GM12878 (cell line): ENCODE measurements at regions of chr3 and their contacts with region 1.

Region 1: GRCh38 chr3:23761440-23761896 is 44.3 kb upstream of the UBE2E1 start:
- DNase-seq: peak; percentile 56
- ATAC-seq: peak; percentile 68
- H3K4me3 ChIP-seq: peak overlapping the region; percentile 50; the same call in 1 of the 2 replicates
- H3K27ac ChIP-seq: peak overlapping the region; percentile 39
- H3K4me1 ChIP-seq: peaks cover 37% of the 10 kb centered on the region
- H3K27me3 ChIP-seq: no peaks in the 10 kb centered on the region
- CTCF ChIP-seq: peak; percentile 49 to 59 (median 54)
- EP300 ChIP-seq: no peak; a peak in 1 of 4 replicates
- POLR2A ChIP-seq: no peak
- RAD21 ChIP-seq: peak; percentile 72

Region 2: GRCh38 chr3:23161896-23162570 is 599.4 kb before region 1 on chr3:
- CTCF ChIA-PET with region 1: interaction called, 5 read pairs
- POLR2A ChIA-PET with region 1: no interaction called
- RAD21 ChIA-PET with region 1: no interaction called
- SMC1A ChIA-PET with region 1: no interaction called
- in situ Hi-C with region 1: no loop called
- intact Hi-C with region 1: loop called (anchors 2 kb)
- DNase-seq: peak; percentile 69
- ATAC-seq: peak; percentile 74
- H3K4me3 ChIP-seq: peak overlapping the region; percentile 19; the same call in 1 of the 2 replicates
- H3K27ac ChIP-seq: peak overlapping the region; percentile 66
- H3K4me1 ChIP-seq: peaks cover 37% of the 10 kb centered on the region
- H3K27me3 ChIP-seq: no peaks in the 10 kb centered on the region
- CTCF ChIP-seq: no peak
- EP300 ChIP-seq: peak in 1 of 2 experiments; percentile 28; a peak in 2 of 4 replicates
- POLR2A ChIP-seq: no peak
- RAD21 ChIP-seq: no peak

Region 3: GRCh38 chr3:23648326-23648995 is 113.0 kb before region 1 on chr3:
- CTCF ChIA-PET with region 1: interaction called, 3 read pairs
- POLR2A ChIA-PET with region 1: no interaction called
- RAD21 ChIA-PET with region 1: interaction called, 20 read pairs
- SMC1A ChIA-PET with region 1: interaction called, 35 read pairs
- in situ Hi-C with region 1: no loop called
- intact Hi-C with region 1: loop called (anchors 2 kb)
- DNase-seq: no peak
- ATAC-seq: peak; percentile 20
- H3K4me3 ChIP-seq: no peak overlapping the region
- H3K27ac ChIP-seq: no peak overlapping the region
- H3K4me1 ChIP-seq: peaks cover 26% of the 10 kb centered on the region
- H3K27me3 ChIP-seq: no peaks in the 10 kb centered on the region
- CTCF ChIP-seq: peak in 1 of 3 experiments; percentile 7; a peak in 1 of 6 replicates
- EP300 ChIP-seq: no peak
- POLR2A ChIP-seq: no peak
- RAD21 ChIP-seq: peak; percentile 43; the same call in 1 of the 2 replicates

Region 4: DNA sequence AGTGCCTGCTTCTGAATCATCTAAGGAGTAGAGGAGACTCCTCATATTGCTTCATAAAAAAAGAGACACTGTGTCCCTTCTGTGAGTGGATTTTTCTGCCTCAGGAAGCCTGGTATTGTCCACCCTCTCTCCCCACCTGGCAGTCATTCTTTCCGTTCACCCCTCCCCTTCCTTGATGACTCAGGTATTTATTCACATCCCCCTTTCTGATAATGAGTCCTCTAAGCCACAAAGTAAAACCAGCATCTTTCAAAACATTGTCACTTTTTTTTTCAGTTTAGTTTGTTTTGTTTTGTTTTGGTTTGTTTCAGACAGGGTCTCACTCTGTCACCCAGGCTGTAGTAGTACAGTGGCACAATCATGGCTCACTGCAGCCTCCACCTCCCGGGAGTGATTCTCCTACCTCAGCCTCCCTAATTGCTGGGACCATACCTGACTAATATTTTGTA is 20.9 kb before region 1 on chr3:
- CTCF ChIA-PET with region 1: interaction called, 5 read pairs
- POLR2A ChIA-PET with region 1: no interaction called
- RAD21 ChIA-PET with region 1: interaction called, 5 read pairs
- SMC1A ChIA-PET with region 1: interaction called, 10 read pairs
- in situ Hi-C with region 1: no loop called
- intact Hi-C with region 1: no loop called
- DNase-seq: no peak
- ATAC-seq: peak; percentile 94
- H3K4me3 ChIP-seq: no peak overlapping the region
- H3K27ac ChIP-seq: no peak overlapping the region
- H3K4me1 ChIP-seq: peaks cover 7% of the 10 kb centered on the region
- H3K27me3 ChIP-seq: no peaks in the 10 kb centered on the region
- CTCF ChIP-seq: no peak
- EP300 ChIP-seq: peak; percentile 32 to 39; a peak in 2 of 4 replicates
- POLR2A ChIP-seq: no peak
- RAD21 ChIP-seq: no peak

Region 5: GRCh38 chr3:23834082-23834870 is 72.8 kb after region 1 on chr3:
- CTCF ChIA-PET with region 1: interaction called, 17 read pairs
- POLR2A ChIA-PET with region 1: interaction called, 5 read pairs
- RAD21 ChIA-PET with region 1: interaction called, 22 read pairs
- SMC1A ChIA-PET with region 1: interaction called, 29 read pairs
- in situ Hi-C with region 1: no loop called
- intact Hi-C with region 1: no loop called
- DNase-seq: no peak
- ATAC-seq: no peak
- H3K4me3 ChIP-seq: no peak overlapping the region
- H3K27ac ChIP-seq: no peak overlapping the region
- H3K4me1 ChIP-seq: peaks cover 56% of the 10 kb centered on the region
- H3K27me3 ChIP-seq: no peaks in the 10 kb centered on the region
- CTCF ChIP-seq: peak in 2 of 3 experiments; percentile 36 to 53; a peak in 5 of 6 replicates
- EP300 ChIP-seq: no peak
- POLR2A ChIP-seq: no peak
- RAD21 ChIP-seq: peak; percentile 65

Region 6: GRCh38 chr3:23888617-23889228 is 127.3 kb after region 1 on chr3:
- CTCF ChIA-PET with region 1: no interaction called
- POLR2A ChIA-PET with region 1: no interaction called
- RAD21 ChIA-PET with region 1: no interaction called
- SMC1A ChIA-PET with region 1: no interaction called
- in situ Hi-C with region 1: no loop called
- intact Hi-C with region 1: no loop called
- DNase-seq: no peak
- ATAC-seq: peak; percentile 56
- H3K4me3 ChIP-seq: no peak overlapping the region
- H3K27ac ChIP-seq: no peak overlapping the region
- H3K4me1 ChIP-seq: no peaks in the 10 kb centered on the region
- H3K27me3 ChIP-seq: no peaks in the 10 kb centered on the region
- CTCF ChIP-seq: peak; percentile 61 to 73 (median 70)
- EP300 ChIP-seq: no peak
- POLR2A ChIP-seq: no peak
- RAD21 ChIP-seq: peak; percentile 78

Region 7: DNA sequence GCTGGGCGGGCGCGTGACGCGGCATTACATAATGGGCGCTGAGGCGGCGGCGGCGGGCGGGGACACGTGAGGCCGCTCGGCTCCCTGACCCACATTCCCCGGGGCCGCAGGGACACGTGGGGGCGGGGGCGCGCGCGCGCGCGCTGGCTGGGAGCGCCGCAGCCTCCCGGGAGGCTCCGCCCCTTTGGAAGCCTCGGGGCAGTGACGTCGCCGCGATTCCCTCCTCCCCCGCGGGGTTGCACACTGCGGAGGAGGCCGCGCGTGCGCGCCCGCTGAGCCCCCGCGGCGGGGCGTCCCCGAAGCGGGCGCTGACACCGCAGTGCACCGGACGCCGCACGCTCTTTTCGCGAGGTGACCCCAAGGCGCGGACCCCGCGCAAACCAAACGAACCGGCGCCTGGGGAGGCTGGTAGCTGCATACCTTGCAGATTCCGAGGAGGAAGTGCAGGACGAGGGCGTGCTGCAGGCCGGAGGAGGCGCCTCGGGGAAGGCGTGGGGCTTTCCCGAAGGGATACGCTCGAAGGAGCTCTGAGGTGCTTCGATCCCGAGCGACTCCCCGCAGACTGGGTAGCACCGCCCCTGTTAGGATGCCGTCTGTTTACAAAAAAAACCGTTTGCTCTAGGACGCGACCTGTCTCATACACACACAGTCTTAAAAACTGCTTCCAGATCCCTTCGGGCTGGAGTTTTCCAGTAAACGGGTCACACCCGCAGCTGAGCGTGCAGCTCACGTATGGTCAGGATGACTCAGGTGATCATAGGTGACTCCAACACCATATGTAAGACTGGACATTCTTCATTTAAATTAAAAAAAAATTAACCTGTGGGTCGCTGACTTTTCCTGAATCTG is 184.7 kb after region 1 on chr3:
- CTCF ChIA-PET with region 1: no interaction called
- POLR2A ChIA-PET with region 1: no interaction called
- RAD21 ChIA-PET with region 1: no interaction called
- SMC1A ChIA-PET with region 1: interaction called, 3 read pairs
- in situ Hi-C with region 1: no loop called
- intact Hi-C with region 1: loop called (anchors 5 kb)
- DNase-seq: peak; percentile 66
- ATAC-seq: peak; percentile 81
- H3K4me3 ChIP-seq: peak overlapping the region; percentile 98
- H3K27ac ChIP-seq: peak overlapping the region; percentile 82
- H3K4me1 ChIP-seq: peaks cover 12% of the 10 kb centered on the region
- H3K27me3 ChIP-seq: peaks cover 0 to 3% of the 10 kb centered on the region in 2 experiments; a peak in 1 of 4 replicates
- CTCF ChIP-seq: no peak
- EP300 ChIP-seq: peak in 1 of 2 experiments; percentile 39; a peak in 1 of 4 replicates
- POLR2A ChIP-seq: peak; percentile 78
- RAD21 ChIP-seq: no peak

Region 8: GRCh38 chr3:24012589-24013269 is 251.3 kb after region 1 on chr3:
- CTCF ChIA-PET with region 1: no interaction called
- POLR2A ChIA-PET with region 1: no interaction called
- RAD21 ChIA-PET with region 1: no interaction called
- SMC1A ChIA-PET with region 1: no interaction called
- in situ Hi-C with region 1: no loop called
- intact Hi-C with region 1: no loop called
- DNase-seq: no peak
- ATAC-seq: peak; percentile 66
- H3K4me3 ChIP-seq: no peak overlapping the region
- H3K27ac ChIP-seq: no peak overlapping the region
- H3K4me1 ChIP-seq: no peaks in the 10 kb centered on the region
- H3K27me3 ChIP-seq: no peaks in the 10 kb centered on the region
- CTCF ChIP-seq: no peak
- EP300 ChIP-seq: no peak
- POLR2A ChIP-seq: no peak
- RAD21 ChIP-seq: no peak